ENCODE measurements at regions of chr6 and their contacts with region 1.

Region 1: DNA sequence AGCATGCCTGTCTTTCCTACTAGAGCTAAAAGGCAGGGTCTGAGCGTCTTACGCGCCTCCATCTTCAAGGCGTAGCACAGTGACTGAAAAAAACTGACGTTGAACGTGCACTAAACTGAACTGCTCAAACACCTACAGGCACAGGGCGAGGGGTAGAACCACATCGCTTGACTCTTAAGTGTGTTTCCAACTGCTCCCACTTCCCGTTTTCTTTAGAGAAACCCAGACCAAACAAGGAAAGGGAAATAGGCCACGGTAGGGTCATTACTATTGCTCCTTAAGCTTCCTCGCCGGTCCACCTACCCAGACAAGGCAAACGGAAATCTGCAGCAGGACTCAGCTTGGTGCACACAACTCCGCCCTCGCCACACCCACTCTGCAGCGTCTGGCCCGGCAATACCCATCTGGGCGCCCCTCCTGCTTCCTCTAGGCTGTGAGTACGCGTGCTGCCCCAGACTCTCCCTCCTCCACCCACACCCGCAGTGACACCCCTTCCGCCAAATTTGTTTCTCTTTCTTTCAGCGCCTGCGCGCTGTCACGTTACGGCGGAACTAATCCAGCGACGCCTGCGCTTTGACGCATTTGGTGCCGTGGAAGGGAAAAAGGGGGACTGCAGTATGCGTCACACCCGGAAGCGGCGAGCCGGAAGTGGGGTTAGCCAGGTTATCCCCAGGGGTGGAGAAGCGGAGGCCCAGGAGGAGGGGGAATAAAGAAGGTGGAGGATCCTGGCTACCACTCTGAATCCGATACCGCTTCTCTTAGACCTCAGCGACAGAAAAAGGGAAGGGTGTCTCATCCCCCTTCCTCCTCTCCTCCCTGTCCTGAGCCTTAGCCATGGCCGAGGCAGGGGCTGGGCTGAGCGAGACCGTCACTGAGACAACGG is at the start of gene PPP1R11:
- DNase-seq: peak; percentile 97 to 98
- ATAC-seq: peak; percentile 95 to 96
- H3K4me3 ChIP-seq: peak within 1 kb of the TSS; percentile 79 to 95 (median 86)
- H3K27ac ChIP-seq: peak within 1 kb of the TSS; percentile 85 to 93 (median 90)
- H3K4me1 ChIP-seq: peaks cover 29 to 33% of the 10 kb centered on the region in 2 donors
- H3K27me3 ChIP-seq: peaks cover 9 to 16% (median 10%) of the 10 kb centered on the region in 3 donors
- CTCF ChIP-seq: peak in 1 of 5 experiments; percentile 8
- POLR2A ChIP-seq: peak; percentile 57 to 80
- total RNA-seq, gene PPP1R11: 34.0 to 72.4 (median 49.9) TPM

Region 2: DNA sequence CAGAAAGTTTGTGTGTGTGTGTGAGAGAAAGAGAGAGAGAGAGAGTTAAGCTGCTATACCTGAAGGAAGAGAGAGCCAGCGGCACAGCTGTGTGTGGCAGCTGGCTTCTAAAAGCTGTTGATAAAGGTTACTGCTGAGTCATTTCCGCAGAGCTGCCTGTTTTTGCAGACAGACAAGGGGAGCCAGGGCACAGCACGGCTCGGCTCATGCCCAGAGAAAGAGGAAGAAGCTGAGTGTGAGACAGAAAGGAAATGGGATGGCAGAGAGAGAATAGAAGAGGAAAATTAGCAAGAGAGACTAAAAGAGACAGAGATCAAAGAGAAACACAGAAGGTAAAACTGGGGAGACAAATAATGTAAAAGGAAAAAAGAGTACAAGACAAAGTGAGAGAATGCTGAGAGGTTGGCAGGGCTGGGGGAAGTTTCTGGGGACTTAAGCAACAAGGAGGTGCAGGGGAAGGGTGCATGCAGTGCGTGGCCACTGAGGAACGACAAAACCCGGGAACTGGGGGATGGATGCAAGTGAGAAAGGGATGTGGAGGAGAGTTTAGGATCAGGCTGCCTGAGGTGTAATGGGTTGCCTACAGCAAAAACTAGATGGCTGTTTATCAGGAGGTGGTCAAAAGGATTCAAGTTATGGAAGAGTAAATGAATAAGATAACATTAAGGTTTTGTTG is 101.8 kb before region 1 on chr6:
- in situ Hi-C with region 1: no loop called
- intact Hi-C with region 1: loop called (anchors 2 kb)
- DNase-seq: peak; percentile 82 to 87
- ATAC-seq: peak; percentile 92
- H3K4me3 ChIP-seq: peak overlapping the region; percentile 44 to 58 (median 55)
- H3K27ac ChIP-seq: peak overlapping the region; percentile 86 to 92 (median 87)
- H3K4me1 ChIP-seq: peaks cover 38 to 54% of the 10 kb centered on the region in 2 donors
- H3K27me3 ChIP-seq: no peaks in the 10 kb centered on the region
- CTCF ChIP-seq: no peak
- POLR2A ChIP-seq: peak; percentile 63 to 71

Region 3: GRCh38 chr6:30006170-30007131 is 60.4 kb before region 1 on chr6:
- in situ Hi-C with region 1: no loop called
- intact Hi-C with region 1: no loop called
- DNase-seq: no peak
- ATAC-seq: peak; percentile 64 to 69
- H3K4me3 ChIP-seq: peak overlapping the region; percentile 58 to 88 (median 68)
- H3K27ac ChIP-seq: peak overlapping the region in 1 of 4 donors; percentile 51
- H3K4me1 ChIP-seq: peaks cover 9 to 11% of the 10 kb centered on the region in 2 donors
- H3K27me3 ChIP-seq: peaks cover 25 to 35% (median 31%) of the 10 kb centered on the region in 3 donors
- CTCF ChIP-seq: no peak
- POLR2A ChIP-seq: no peak

Region 4: DNA sequence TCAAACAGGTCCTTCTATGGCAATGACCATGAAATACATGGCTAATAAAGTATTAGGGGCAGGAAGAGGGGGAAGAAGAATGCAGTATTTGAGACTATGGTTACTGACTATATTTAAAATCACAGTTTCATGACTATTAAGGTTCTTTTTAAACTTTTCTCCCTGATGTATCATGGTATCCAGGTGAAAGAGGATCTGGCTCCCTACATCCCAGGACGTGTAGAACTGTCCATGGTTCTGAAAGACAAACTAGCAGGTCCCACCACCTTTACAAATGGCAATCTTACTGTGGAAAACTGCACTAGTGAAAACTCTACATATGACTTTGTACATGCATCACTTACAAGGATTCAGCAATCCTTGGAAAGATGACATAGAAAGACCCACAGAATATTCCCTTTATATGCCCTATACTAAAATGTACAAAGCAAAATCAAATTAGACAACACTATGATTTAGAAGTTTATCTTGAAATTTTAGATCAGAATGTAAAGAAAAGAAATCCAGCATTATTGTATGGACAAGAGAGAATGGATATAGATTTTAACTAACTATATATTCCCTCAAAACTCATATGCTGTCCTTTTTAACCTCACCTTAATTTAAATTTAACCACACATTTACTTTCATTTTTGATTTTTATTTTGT is 311.6 kb after region 1 on chr6:
- in situ Hi-C with region 1: no loop called
- intact Hi-C with region 1: no loop called
- DNase-seq: no peak
- ATAC-seq: no peak
- H3K4me3 ChIP-seq: no peak overlapping the region
- H3K27ac ChIP-seq: no peak overlapping the region
- H3K4me1 ChIP-seq: no peaks in the 10 kb centered on the region
- H3K27me3 ChIP-seq: peaks cover 3 to 6% (median 4%) of the 10 kb centered on the region in 3 donors
- CTCF ChIP-seq: no peak
- POLR2A ChIP-seq: no peak